Activated naive CD4-positive, alpha-beta T cell treated with anti-CD3 and anti-CD28 coated beads for 36 hours (primary cell): ENCODE measurements at regions of chr2 and their contacts with region 1.

Region 1: GRCh38 chr2:45494269-45494977 is 116.6 kb downstream of the SRBD1 start:
- DNase-seq: no peak
- H3K4me3 Mint-ChIP-seq: no peak overlapping the region
- H3K27ac Mint-ChIP-seq: no peak overlapping the region
- H3K4me1 Mint-ChIP-seq: peaks cover 30% of the 10 kb centered on the region
- H3K27me3 Mint-ChIP-seq: no peaks in the 10 kb centered on the region

Region 2: DNA sequence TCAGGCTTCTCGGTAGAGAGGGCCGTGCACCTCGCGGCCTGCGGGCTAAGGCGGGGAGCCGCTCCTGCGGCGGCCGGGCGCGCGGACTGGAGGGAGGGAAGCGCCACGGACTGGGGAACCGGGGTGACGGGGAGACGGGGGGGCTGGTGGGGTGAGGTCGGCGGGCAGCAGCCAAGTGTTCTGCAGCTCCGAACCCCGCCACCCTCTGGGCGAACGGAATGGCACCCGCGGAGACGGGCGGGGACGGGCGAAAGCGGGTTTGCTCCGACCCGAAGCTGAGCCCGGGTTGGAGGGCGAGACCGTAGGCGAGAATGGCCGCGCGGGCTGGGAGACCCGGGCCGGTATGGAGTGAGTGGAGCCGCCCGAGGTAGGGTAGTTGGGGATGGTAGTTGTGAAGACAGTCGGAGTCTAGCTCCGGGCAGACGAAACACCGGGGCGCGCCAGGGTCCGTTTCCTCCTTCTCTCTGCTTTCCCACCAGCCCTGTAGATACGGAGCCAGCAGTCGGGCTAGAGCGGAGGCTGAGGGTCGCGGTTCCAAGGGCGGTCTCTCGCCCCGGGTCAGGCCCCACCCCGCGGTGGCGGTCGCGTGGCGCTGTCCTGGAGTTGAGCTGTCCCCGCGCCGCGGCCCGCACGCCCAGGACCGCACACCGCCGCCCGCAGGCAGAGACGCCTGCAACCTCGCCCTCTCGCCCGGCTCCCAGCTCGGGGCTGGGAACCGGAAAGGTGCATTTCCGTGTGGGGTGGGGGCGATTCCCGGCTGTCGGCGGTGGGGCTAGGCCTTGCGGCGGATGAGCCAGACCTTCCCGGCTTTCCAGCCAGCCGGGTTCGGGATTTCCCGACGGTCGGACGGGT is 324.9 kb before region 1 on chr2:
- CTCF ChIA-PET with region 1: no interaction called
- intact Hi-C with region 1: loop called (anchors 5 kb)
- DNase-seq: peak; percentile 9
- H3K4me3 Mint-ChIP-seq: peak overlapping the region; percentile 62
- H3K27ac Mint-ChIP-seq: no peak overlapping the region
- H3K4me1 Mint-ChIP-seq: peaks cover 10% of the 10 kb centered on the region
- H3K27me3 Mint-ChIP-seq: peaks cover 59% of the 10 kb centered on the region

Region 3: GRCh38 chr2:45505138-45505537 is 10.7 kb after region 1 on chr2:
- CTCF ChIA-PET with region 1: no interaction called
- intact Hi-C with region 1: no loop called
- DNase-seq: no peak
- H3K4me3 Mint-ChIP-seq: no peak overlapping the region
- H3K27ac Mint-ChIP-seq: no peak overlapping the region
- H3K4me1 Mint-ChIP-seq: no peaks in the 10 kb centered on the region
- H3K27me3 Mint-ChIP-seq: no peaks in the 10 kb centered on the region

Region 4: DNA sequence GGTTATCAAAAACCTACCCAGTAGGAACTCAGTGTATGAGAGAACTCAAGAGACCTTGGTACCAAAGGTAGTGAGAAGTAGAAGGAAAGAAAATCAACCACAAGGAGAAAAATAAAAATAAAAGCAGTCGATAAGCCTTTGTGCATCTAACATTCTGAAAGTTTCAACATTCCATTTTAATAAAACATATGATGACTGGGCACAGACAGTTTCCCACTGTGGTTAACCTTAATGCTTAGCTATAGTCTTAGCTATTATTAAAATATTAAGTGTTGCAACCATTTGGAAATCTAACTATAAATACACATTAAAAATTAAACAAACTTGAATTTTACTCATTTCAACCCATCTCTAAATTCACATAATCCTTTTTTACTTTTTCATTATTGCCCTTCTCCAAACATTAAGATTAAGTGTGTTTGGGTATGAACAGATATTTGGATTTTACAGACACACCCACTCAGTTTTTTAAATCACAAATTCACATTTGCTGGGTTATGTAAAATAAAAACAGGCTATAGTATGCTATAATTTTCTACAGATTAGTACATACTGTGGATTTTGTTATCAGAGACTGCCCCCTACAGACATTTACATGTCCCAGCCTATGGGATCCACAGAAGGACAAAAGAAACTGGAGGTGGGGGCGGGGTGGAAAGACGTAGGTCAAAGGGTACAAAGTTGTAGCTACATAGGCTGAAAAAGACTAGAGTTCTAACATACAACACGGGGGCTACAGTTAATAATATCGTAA is 83.8 kb after region 1 on chr2:
- CTCF ChIA-PET with region 1: interaction called, 4 read pairs
- intact Hi-C with region 1: loop called (anchors 1 kb)
- DNase-seq: peak; percentile 40
- H3K4me3 Mint-ChIP-seq: no peak overlapping the region
- H3K27ac Mint-ChIP-seq: no peak overlapping the region
- H3K4me1 Mint-ChIP-seq: peaks cover 2% of the 10 kb centered on the region
- H3K27me3 Mint-ChIP-seq: no peaks in the 10 kb centered on the region